ENCODE measurements at regions of chr15 and their contacts with region 1.

Region 1: DNA sequence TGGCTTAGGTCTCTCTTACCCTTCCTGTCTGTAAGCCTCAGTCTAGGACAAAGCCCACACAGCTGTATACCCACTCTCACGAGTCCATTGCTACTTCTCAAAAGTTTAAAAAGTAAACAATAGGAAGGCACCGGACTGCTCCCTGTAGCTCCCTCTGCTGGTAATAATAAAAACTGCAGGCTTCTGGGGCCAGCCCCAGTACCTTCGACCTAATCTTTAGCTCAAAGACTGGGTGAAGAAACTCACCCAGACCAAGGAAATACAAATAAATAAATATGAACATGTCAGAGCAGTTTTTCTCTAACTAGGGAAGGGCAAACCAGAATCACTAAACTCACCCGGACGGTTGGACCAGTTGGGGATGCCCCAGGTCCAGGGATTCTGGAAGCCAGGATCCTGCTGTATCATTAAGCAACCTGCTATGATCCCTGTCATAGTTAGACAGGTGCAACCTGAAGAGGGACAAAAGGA is 5.0 kb downstream of the FAM219B start:
- DNase-seq: peak; percentile 51
- ATAC-seq: peak; percentile 23

Region 2: GRCh38 chr15:74842581-74843444 is 58.8 kb before region 1 on chr15 and contains the start of gene ULK3:
- intact Hi-C with region 1: loop called (anchors 5 kb)
- DNase-seq: peak; percentile 94
- ATAC-seq: peak; percentile 94
- total RNA-seq, gene ULK3: 35.8 TPM

Region 3: DNA sequence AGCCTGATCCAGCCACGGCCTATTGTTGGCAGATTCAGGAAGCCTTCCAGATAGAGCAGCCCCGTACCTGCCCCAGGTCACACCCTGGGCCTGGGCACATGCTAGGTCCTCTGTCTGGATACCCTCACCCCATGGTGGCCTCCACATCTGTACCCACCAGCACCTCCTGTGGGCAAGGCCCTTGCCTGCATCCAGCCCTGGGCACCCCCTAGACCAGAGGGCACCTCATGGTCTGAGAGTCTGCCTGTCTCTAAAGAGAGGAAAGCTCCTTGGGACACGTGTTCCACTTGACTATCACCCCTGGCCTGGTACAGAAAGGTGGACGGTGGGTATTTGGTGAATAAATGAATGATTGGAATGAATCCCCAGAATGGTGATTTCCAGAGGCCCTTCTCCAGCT is 425.4 kb after region 1 on chr15:
- intact Hi-C with region 1: no loop called
- DNase-seq: no peak
- ATAC-seq: no peak